ENCODE measurements at regions of chr19 and their contacts with region 1.

Region 1: GRCh38 chr19:2543463-2544442 is 67.8 kb downstream of the GADD45B start:
- DNase-seq: peak; percentile 91 to 98 (median 96)
- ATAC-seq: peak; percentile 68 to 88 (median 82)
- H3K4me3 ChIP-seq: peak overlapping the region in 9 of 12 donors; percentile 20 to 46 (median 36)
- H3K27ac ChIP-seq: peak overlapping the region; percentile 80 to 97 (median 90)
- H3K4me1 ChIP-seq: peaks cover 27 to 80% (median 70%) of the 10 kb centered on the region in 12 donors
- H3K27me3 ChIP-seq: no peaks in the 10 kb centered on the region
- CTCF ChIP-seq: peak in 9 of 12 donors; percentile 11 to 66 (median 34)
- POLR2A ChIP-seq: peak in 1 of 2 donors; percentile 50

Region 2: DNA sequence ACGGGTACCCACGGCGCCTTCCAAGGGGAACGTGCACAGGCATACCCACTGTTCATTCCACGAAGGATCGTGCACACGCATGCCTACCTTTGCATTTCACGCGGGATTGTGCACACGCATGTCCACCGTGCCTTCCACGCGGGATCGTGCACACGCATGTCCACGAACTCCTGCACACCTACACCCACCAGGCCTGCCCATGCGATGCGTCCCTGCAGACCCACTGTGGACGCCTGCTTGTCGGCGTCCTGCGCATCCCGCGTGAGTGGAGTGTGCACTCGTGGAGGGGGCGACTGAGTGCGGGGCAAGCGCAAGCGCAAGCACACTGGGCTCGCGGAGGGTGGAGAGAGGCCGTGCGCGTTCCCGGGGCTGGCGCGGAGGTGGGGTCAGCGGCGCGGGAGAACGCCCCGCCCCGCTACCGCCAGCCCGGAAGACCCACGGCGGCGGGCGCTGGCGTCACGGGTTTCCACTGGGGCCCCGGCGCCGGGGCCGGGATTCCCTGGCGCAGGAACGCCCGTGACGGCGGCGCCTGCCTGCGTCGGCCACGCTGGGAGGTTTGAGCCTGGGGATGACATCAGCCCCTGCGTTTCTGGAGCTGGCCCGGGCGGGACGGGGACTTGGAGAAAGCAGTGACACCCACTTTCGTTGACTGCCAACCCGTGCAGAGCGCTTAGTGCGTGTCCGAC is 49.2 kb before region 1 on chr19:
- intact Hi-C with region 1: loop called in 9 of 10 experiments (anchors 1 to 5 kb)
- DNase-seq: peak; percentile 87 to 94 (median 89)
- ATAC-seq: peak; percentile 52 to 81 (median 78)
- H3K4me3 ChIP-seq: peak overlapping the region; percentile 39 to 76 (median 66)
- H3K27ac ChIP-seq: peak overlapping the region; percentile 75 to 98 (median 92)
- H3K4me1 ChIP-seq: peaks cover 2 to 47% (median 23%) of the 10 kb centered on the region in 12 donors
- H3K27me3 ChIP-seq: peaks cover 0 to 27% (median 0%) of the 10 kb centered on the region in 9 donors
- CTCF ChIP-seq: no peak
- POLR2A ChIP-seq: peak in 1 of 2 donors; percentile 24

Region 3: GRCh38 chr19:2507109-2507508 is 36.6 kb before region 1 on chr19:
- intact Hi-C with region 1: no loop called
- DNase-seq: no peak
- ATAC-seq: peak in 3 of 4 donors; percentile 59 to 84 (median 59)
- H3K4me3 ChIP-seq: no peak overlapping the region
- H3K27ac ChIP-seq: no peak overlapping the region
- H3K4me1 ChIP-seq: peaks cover 0 to 21% (median 0%) of the 10 kb centered on the region in 12 donors
- H3K27me3 ChIP-seq: no peaks in the 10 kb centered on the region
- CTCF ChIP-seq: no peak
- POLR2A ChIP-seq: no peak

Region 4: DNA sequence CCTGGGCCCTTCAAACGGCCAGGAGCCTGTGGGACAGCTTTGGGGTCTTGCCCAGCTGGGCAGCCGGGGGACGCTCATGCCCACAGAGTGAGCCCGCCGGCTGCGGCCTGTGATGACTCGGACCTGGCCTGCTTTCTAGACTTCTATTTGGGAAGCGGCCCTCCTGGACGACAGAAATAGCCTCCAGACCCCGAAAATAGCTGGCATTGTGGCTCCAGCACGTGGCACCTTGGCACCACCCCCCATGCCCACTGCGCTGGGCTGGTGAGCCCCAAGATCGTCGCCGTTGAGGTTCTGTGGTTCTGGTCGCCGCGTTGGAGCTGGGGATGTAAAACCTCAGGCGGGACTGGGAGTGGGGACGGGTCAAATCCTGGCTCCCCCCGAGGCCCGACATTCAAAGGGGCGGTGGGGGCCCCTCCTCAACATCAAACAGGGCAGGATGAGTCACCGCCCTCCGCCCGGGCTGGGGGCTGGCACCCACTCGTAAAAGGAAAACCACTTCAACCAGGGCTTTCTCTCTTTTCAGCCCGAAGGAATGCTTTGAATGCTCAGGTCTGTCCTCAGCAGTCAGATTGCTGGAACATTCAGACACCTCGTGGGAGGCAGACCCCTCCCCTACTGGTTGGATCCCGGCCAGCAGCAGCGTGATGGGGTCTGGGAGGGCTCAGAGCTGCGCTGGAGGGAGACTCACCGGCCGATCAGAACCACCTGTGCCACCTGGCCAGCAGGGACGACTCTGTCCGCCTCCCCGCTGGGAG is 25.7 kb before region 1 on chr19:
- intact Hi-C with region 1: no loop called
- DNase-seq: no peak
- ATAC-seq: peak in 2 of 4 donors; percentile 10 to 44
- H3K4me3 ChIP-seq: no peak overlapping the region
- H3K27ac ChIP-seq: no peak overlapping the region
- H3K4me1 ChIP-seq: peaks cover 0 to 13% (median 0%) of the 10 kb centered on the region in 12 donors
- H3K27me3 ChIP-seq: no peaks in the 10 kb centered on the region
- CTCF ChIP-seq: no peak
- POLR2A ChIP-seq: no peak

Region 5: DNA sequence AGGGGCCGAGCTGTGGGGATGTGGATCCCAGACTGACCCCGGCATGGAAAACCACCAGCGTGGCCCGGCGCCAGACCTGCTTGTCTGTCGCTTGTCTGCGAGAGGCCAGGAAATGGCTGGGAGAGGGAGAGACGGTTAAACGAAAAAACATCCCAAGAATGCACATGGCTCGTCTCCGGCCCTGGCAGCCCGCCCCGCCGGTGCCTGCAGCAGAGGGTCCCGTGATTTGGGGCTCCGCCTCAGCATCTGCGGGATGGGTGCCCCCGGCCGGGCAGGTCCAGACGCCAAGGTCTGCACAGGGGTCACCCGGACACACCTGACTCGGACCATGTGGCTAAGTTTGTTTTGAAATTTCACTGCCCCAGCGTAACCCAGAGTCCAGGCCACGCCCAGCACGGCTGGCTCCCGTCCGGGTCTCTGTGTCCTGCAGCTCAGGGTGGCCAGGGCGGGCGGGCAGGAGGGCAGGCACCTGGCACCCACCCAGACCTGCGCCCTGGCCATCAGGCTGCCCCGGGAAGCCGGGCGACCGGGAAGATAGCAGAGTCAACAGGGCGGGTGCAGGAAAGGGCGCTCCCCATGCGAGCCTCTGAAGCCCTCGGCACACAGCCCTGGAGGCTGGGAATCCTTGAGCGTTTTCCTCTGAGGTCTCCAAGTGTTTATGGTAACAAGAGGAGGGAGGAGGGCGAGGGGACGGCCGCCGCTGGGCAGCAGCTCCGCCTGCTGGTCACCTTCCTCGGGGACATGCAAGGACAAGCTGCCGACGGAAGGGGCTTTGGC is 35.3 kb after region 1 on chr19:
- intact Hi-C with region 1: loop called in 8 of 10 experiments (anchors 1 to 5 kb)
- DNase-seq: peak; percentile 88 to 94 (median 91)
- ATAC-seq: peak; percentile 82 to 90 (median 86)
- H3K4me3 ChIP-seq: peak overlapping the region; percentile 4 to 75 (median 54)
- H3K27ac ChIP-seq: peak overlapping the region; percentile 71 to 92 (median 84)
- H3K4me1 ChIP-seq: peaks cover 8 to 53% (median 33%) of the 10 kb centered on the region in 12 donors
- H3K27me3 ChIP-seq: no peaks in the 10 kb centered on the region
- CTCF ChIP-seq: peak; percentile 86 to 97 (median 95)
- POLR2A ChIP-seq: peak in 1 of 2 donors; percentile 40

Region 6: DNA sequence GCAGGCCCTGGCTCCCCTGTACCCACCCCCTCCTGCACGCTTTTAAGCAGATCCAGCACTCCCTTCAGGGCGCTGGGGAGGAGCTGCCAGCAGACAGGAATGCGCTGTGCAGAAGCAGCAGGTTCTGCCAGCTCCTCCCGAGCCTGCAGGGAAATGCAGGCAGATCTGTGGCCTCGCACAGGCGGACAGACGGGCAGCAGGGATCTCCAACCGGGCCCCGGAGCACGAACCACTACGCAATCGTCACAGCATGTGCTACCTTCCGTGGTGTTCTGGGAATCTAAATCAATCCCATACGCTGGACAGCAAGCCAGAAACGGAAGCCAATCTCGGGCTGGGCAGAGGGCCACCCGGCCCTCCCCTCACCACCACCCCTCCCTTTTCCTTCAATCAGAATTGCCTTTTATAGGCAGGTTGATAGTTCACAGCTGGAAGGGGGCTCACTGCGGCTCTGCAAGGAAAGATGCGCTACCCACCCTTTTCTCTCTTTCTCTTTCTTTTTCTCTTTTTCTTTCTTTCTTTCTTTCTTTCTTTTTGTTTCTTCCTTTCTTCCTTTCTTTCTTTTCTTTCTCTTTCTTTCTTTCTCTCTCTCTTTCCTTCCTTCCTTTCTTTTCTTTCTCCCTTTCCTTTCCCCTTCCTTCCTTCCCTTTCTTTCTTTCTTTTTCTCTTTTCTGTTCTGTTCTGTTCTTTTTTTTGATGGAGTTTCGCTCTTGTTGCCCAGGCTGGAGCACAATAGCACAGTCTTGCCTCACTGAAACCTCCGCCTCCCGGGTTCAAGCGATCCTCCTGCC is 58.8 kb after region 1 on chr19:
- intact Hi-C with region 1: loop called in 2 of 10 experiments (anchors 1 kb)
- DNase-seq: peak; percentile 72 to 95 (median 88)
- ATAC-seq: peak; percentile 83 to 95 (median 88)
- H3K4me3 ChIP-seq: peak overlapping the region in 9 of 12 donors; percentile 7 to 42 (median 19)
- H3K27ac ChIP-seq: peak overlapping the region; percentile 54 to 94 (median 82)
- H3K4me1 ChIP-seq: peaks cover 0 to 40% (median 22%) of the 10 kb centered on the region in 12 donors
- H3K27me3 ChIP-seq: no peaks in the 10 kb centered on the region
- CTCF ChIP-seq: peak in 1 of 12 donors; percentile 8
- POLR2A ChIP-seq: peak in 1 of 2 donors; percentile 51

Region 7: GRCh38 chr19:2610637-2611482 is 67.1 kb after region 1 on chr19:
- intact Hi-C with region 1: loop called in 2 of 10 experiments (anchors 1 to 2 kb)
- DNase-seq: peak; percentile 91 to 97 (median 94)
- ATAC-seq: peak; percentile 87 to 95 (median 92)
- H3K4me3 ChIP-seq: peak overlapping the region in 11 of 12 donors; percentile 28 to 59 (median 52)
- H3K27ac ChIP-seq: peak overlapping the region; percentile 73 to 90 (median 82)
- H3K4me1 ChIP-seq: peaks cover 0 to 32% (median 11%) of the 10 kb centered on the region in 12 donors
- H3K27me3 ChIP-seq: no peaks in the 10 kb centered on the region
- CTCF ChIP-seq: peak; percentile 96 to 100 (median 98)
- POLR2A ChIP-seq: peak in 1 of 2 donors; percentile 61

Region 8: GRCh38 chr19:2661615-2662014 is 117.9 kb after region 1 on chr19:
- intact Hi-C with region 1: no loop called
- DNase-seq: no peak
- ATAC-seq: no peak
- H3K4me3 ChIP-seq: no peak overlapping the region
- H3K27ac ChIP-seq: no peak overlapping the region
- H3K4me1 ChIP-seq: peaks cover 0 to 17% (median 5%) of the 10 kb centered on the region in 12 donors
- H3K27me3 ChIP-seq: no peaks in the 10 kb centered on the region
- CTCF ChIP-seq: no peak
- POLR2A ChIP-seq: no peak